H1 (cell line): ENCODE measurements at regions of chr22 and their contacts with region 1.

Region 1: DNA sequence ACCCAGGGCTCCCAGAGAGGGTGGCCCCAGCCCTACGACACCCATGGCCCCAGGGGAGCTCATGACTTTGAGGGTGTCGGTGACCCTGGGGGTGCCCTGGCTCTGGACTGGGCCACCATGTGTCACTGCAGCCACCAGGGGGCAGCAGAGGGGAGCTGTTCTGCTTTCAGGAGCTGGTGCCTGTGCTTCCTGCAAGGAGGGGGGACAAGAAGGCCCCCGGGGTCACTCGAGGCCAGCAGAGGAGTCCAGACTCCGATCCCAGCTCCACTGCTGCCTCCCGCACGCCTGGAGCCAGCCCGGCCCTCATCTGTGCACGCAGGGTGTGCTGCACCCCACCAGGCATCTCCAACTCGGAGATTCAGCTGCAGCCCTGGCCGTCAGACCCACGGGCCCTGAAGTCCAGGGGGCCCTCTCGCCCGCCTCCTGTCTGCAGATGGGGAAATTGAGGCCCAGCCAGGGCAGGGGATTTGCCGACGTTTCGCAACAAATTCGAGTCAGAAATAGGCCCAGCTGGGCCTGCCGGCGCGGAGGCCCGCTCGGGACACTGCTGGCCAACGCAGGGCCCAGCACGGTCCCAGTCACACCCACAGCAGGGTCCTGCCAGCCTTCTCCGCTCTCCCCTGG is 29.5 kb upstream of the WNT7B start:
- DNase-seq: peak; percentile 56 to 98
- H3K4me3 ChIP-seq: no peak overlapping the region
- H3K27ac ChIP-seq: no peak overlapping the region
- H3K4me1 ChIP-seq: no peaks in the 10 kb centered on the region; a peak in 1 of 7 replicates
- H3K27me3 ChIP-seq: no peaks in the 10 kb centered on the region
- CTCF ChIP-seq: peak; percentile 83 to 94 (median 93)
- EP300 ChIP-seq: no peak
- POLR2A ChIP-seq: no peak
- RAD21 ChIP-seq: peak; percentile 84 to 86

Region 2: DNA sequence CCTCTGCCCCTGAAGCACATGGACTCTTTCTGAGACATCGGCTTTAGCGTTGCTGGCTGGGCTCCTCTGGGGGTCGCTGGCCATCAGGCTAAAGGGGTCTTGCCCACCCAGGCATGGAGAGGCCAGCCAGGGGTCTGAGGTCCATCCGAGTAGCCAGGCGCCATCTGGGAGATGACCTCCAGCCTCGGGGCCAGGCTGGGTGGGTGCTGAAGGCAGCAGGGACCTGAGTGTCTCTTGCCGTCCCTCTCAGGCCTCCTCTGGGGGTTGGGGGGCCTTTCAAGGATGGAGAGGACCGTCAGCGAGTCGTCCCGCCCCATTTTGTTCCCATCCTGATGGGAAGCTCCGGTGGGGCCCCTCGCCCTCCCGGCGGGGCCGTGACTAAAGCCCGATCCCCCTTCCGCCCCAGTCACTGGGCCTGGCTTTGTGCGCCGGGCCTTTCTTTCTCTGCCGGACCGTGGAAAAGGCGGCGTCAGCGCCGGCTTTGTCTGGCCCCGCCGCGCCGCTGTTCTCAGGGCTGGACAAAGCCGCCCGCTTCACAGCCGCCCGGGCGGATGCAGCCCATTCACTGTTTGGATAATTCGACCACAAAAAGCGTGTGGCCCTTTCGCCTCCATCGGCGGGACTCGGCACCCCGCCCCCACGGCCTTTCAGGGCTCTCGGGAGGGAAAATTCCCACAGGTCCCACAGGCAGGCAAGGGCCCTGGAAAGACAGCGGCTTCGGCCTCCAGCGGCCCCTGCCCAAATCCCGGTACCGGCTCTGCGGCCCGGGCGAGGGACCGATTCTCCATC is 117.0 kb before region 1 on chr22:
- CTCF ChIA-PET with region 1: no interaction called
- POLR2A ChIA-PET with region 1: no interaction called
- DNase-seq: no peak
- H3K4me3 ChIP-seq: no peak overlapping the region
- H3K27ac ChIP-seq: no peak overlapping the region
- H3K4me1 ChIP-seq: peaks cover 0 to 3% (median 0%) of the 10 kb centered on the region in 4 experiments; a peak in 1 of 7 replicates
- H3K27me3 ChIP-seq: peaks cover 0 to 2% (median 0%) of the 10 kb centered on the region in 4 experiments; a peak in 1 of 7 replicates
- CTCF ChIP-seq: no peak
- EP300 ChIP-seq: no peak
- POLR2A ChIP-seq: no peak
- RAD21 ChIP-seq: no peak

Region 3: DNA sequence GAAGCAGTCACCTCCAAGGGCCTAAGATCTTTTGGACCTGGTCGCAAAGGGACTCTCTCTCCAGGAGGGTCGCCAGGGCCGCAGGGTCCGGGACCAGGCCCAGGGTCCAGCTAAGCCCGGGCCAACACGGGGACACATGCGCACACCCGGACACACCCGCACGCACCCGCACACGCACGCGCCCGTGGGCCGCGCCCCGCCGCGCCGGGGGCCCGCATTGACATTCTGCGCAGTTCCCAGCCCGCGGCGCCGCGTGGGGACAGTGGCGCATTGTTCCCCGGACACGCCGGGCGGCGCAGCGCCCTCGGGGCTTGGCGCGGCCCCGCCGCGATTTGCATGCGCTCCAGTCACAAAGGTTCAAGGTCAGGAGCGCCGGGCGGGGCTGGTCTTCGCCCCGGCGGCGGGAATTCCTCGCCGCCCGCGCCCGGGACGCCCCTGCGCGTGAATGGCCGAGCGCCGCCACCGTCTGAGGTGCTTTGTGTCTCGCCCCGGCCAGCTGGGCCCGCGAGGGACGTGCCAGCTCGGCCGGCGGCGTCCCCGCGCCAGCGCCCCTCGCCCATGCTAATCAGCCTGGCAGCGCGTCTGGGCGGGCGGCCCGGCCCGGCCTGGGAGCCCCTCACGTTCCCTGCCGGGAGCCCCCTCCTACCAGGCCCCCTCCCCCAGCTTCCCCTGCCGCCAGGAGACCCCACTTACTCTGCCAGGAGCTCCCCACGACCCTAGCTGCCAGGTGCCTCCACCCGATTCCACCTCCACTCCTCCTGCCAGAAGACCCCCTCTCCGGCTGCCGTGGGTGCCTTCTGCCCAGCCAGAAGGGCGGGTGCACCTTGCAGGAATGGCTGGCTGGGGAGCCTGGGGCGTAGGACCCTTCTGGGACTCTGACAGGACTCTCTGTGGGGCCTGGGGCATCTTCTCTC is 21.0 kb after region 1 on chr22:
- CTCF ChIA-PET with region 1: interaction called, 24 read pairs
- POLR2A ChIA-PET with region 1: interaction called, 3 read pairs
- DNase-seq: no peak
- H3K4me3 ChIP-seq: peak overlapping the region; percentile 36 to 62 (median 51)
- H3K27ac ChIP-seq: no peak overlapping the region
- H3K4me1 ChIP-seq: peaks cover 0 to 18% (median 11%) of the 10 kb centered on the region in 4 experiments; a peak in 6 of 7 replicates
- H3K27me3 ChIP-seq: peaks cover 10 to 47% (median 35%) of the 10 kb centered on the region in 4 experiments
- CTCF ChIP-seq: no peak
- EP300 ChIP-seq: no peak
- POLR2A ChIP-seq: no peak
- RAD21 ChIP-seq: no peak

Region 4: GRCh38 chr22:46053563-46054090 is 47.1 kb after region 1 on chr22:
- CTCF ChIA-PET with region 1: interaction called, 15 read pairs
- POLR2A ChIA-PET with region 1: no interaction called
- DNase-seq: no peak
- H3K4me3 ChIP-seq: no peak overlapping the region
- H3K27ac ChIP-seq: no peak overlapping the region
- H3K4me1 ChIP-seq: peaks cover 0 to 6% (median 2%) of the 10 kb centered on the region in 4 experiments; a peak in 5 of 7 replicates
- H3K27me3 ChIP-seq: peaks cover 0 to 3% (median under 1%) of the 10 kb centered on the region in 4 experiments; a peak in 1 of 7 replicates
- CTCF ChIP-seq: no peak
- EP300 ChIP-seq: no peak
- POLR2A ChIP-seq: no peak
- RAD21 ChIP-seq: no peak

Region 5: GRCh38 chr22:46078241-46079092 is 72.0 kb after region 1 on chr22:
- CTCF ChIA-PET with region 1: interaction called, 15 read pairs
- POLR2A ChIA-PET with region 1: interaction called, 4 read pairs
- DNase-seq: no peak
- H3K4me3 ChIP-seq: no peak overlapping the region; a peak in 1 of 8 replicates
- H3K27ac ChIP-seq: no peak overlapping the region
- H3K4me1 ChIP-seq: peaks cover 0 to 58% (median 39%) of the 10 kb centered on the region in 4 experiments; a peak in 6 of 7 replicates
- H3K27me3 ChIP-seq: peaks cover 0 to 6% (median 2%) of the 10 kb centered on the region in 4 experiments; a peak in 3 of 7 replicates
- CTCF ChIP-seq: no peak
- EP300 ChIP-seq: no peak
- POLR2A ChIP-seq: no peak
- RAD21 ChIP-seq: no peak

Region 6: DNA sequence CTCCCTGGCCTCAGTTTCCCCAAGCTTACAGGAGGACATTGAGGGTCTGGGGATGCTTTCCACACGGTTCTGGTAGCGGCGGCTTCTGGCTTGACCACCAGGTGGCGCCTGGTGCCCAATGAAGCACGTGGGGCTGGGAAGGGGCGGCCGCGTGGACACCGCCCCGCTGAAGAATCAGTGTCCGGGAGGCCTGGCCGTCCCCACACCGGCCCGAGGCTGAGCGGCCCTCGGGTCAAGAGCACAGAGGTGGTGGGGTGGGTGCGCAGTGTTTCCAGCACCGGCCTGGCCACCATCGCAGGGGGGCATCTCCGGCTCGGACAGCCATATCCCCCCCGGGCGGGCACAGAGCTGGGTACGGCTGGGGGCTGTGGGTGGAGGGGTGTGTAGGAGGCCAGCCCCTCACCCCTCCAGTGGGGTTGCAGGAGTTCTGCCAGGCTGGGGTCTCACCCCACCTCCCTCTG is 116.0 kb after region 1 on chr22:
- CTCF ChIA-PET with region 1: interaction called, 147 read pairs
- POLR2A ChIA-PET with region 1: interaction called, 4 read pairs
- DNase-seq: peak in 1 of 2 experiments; percentile 90
- H3K4me3 ChIP-seq: no peak overlapping the region
- H3K27ac ChIP-seq: no peak overlapping the region
- H3K4me1 ChIP-seq: peaks cover 0 to 3% (median 0%) of the 10 kb centered on the region in 4 experiments; a peak in 3 of 7 replicates
- H3K27me3 ChIP-seq: peaks cover 0 to 6% (median 0%) of the 10 kb centered on the region in 4 experiments; a peak in 2 of 7 replicates
- CTCF ChIP-seq: peak; percentile 84 to 93 (median 86)
- EP300 ChIP-seq: no peak
- POLR2A ChIP-seq: no peak
- RAD21 ChIP-seq: peak; percentile 81 to 82